Breast epithelium (tissue), 4 donors: ENCODE measurements at regions of chr5 and their contacts with region 1.

Region 1: DNA sequence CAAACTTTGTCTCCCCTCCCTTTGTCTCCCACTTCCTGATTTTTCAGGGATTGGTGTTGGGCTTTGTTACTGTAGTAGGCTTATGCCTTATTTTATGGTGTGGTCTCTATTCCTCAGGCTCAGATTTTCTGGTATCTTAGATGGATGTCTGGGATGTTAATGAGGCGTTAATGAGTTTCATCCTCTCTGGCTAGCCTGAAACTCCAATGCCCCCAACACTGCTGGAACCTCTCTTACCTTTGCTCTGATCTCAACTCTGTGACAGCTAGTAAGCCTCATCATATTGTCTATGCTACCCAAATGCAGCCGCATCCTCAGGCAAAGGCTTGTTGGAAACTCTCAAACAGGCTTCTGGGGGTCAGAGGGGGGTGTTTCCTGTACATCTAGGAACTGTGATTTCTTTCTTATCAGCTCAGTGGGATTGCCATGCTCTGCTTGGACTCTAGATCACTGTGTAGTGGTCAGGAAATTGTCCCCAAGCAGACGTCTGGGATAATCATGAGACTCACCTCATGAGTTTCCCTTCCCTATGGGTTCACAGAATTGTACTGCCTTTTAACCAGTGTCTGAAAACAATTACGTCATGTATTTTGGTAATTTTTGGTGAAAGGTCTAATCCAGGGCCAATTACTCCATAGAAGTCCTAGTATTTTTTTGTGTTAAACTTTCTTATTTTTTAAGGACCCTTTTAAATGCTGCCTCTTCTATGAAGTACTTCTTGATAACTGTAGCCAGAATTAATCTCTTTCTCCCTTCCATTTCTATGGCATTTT is 88.8 kb upstream of the TRPC7 start:
- DNase-seq: no peak
- H3K4me3 ChIP-seq: no peak overlapping the region
- H3K27ac ChIP-seq: no peak overlapping the region
- H3K4me1 ChIP-seq: no peaks in the 10 kb centered on the region
- H3K27me3 ChIP-seq: no peaks in the 10 kb centered on the region
- CTCF ChIP-seq: no peak
- POLR2A ChIP-seq: no peak

Region 2: DNA sequence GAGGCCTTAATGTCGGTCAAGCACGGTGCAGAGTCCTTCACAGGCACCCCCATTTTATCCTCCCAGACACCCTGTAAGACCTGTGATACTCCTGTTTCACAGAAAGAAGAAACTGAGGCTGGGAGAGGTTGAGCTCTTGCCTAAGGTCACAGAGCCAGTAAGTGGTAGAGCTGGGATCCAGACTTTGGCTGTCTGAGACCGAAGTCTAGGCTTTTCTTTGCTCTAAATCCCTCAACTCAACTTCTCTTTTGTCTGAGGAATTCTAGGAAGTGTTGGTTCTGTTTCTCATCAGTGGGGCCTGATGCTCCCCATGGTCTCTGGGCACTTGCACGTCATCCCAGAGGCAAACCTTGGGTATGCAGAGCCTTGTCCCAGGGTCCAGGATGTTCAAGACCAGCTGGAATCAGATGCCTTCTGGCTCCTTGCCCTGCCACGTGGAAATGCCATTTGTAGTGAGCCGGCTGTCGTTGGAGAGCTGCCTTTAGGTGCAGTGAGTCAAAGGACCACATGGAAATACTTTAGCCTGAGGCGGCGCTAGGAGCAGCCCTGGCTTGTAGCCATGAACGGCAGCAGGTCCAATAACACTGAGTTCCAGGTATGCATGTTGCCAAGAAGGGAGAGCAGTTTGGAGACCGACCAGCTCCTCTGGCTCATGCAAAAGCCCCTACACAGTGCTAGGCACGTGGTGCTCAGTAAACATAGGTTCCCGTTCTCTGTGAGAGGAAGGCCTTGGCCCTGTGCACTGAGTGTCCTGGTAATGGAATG is 1016.2 kb before region 1 on chr5:
- intact Hi-C with region 1: loop called (anchors 5 kb)
- DNase-seq: no peak
- H3K4me3 ChIP-seq: no peak overlapping the region
- H3K27ac ChIP-seq: no peak overlapping the region
- H3K4me1 ChIP-seq: no peaks in the 10 kb centered on the region
- H3K27me3 ChIP-seq: peaks cover 0 to 7% of the 10 kb centered on the region in 2 donors
- CTCF ChIP-seq: no peak
- POLR2A ChIP-seq: no peak

Region 3: DNA sequence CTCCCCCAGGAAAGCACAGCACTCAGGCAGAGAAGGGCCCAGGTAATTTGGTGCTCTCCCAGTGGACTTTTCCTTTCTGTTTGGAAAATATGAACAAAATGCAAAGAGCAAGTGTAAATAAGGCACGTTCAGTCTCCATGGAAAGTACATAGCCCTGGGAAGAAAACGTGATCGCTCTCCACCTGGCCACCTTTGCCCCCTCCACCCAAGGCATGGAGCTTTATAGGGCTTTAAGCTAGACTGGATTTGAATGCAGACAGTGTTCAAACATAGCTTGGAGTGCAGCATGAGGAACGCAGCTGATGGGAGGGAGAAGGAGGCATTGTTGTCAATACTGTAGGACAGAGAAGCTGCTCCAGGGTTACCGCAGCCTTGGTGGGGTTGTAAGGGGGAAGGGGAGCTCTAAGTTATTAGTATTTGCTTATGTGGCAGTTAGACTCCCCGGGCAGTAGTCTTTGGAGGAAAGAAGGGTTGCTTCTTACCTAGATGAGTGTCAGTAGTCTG is 544.7 kb after region 1 on chr5:
- intact Hi-C with region 1: no loop called
- DNase-seq: no peak
- H3K4me3 ChIP-seq: no peak overlapping the region
- H3K27ac ChIP-seq: no peak overlapping the region
- H3K4me1 ChIP-seq: no peaks in the 10 kb centered on the region
- H3K27me3 ChIP-seq: no peaks in the 10 kb centered on the region
- CTCF ChIP-seq: no peak
- POLR2A ChIP-seq: no peak